ENCODE measurements at regions of chr19 and their contacts with region 1.

Region 1: DNA sequence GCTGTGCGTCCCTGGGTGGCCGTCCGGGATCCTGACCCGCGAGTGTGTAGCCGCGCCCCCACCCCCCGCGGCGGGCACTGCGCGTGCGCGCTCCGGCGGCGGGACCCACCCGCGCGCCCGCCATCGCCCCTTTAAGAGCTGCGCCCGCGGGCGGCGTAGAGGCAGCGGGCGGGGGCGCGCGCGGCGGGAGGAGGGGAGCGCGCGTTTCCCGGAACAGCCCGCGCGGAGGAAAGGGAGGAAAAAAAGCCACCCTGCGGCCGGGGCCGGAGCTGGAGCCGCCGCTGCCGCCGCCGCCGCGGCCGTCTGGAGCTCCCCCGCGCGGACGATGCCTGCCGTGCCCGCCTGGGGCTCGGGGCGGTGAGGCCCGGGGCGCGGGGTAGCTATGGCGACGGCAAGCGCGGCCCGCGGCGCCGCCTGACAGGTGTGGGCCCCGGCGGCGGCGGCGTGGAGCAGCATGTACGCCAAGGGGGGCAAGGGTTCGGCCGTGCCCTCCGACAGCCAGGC is at the start of gene SSBP4:
- DNase-seq: peak; percentile 48 to 80
- H3K4me3 ChIP-seq: peak within 1 kb of the TSS; percentile 68
- H3K27ac ChIP-seq: no peak within 1 kb of the TSS
- H3K4me1 ChIP-seq: peaks cover 52% of the 10 kb centered on the region
- H3K27me3 ChIP-seq: no peaks in the 10 kb centered on the region
- CTCF ChIP-seq: no peak; the same call in 1 of the 2 replicates
- total RNA-seq, gene SSBP4: 56.6 and 65.2 TPM in 2 replicates

Region 2: GRCh38 chr19:18112989-18113478 is 306.2 kb before region 1 on chr19:
- CTCF ChIA-PET with region 1: no interaction called
- POLR2A ChIA-PET with region 1: no interaction called
- intact Hi-C with region 1: loop called (anchors 5 kb)
- DNase-seq: peak; percentile 63 to 82
- H3K4me3 ChIP-seq: no peak overlapping the region
- H3K27ac ChIP-seq: no peak overlapping the region
- H3K4me1 ChIP-seq: peaks cover 17% of the 10 kb centered on the region
- H3K27me3 ChIP-seq: no peaks in the 10 kb centered on the region
- CTCF ChIP-seq: peak; percentile 89

Region 3: DNA sequence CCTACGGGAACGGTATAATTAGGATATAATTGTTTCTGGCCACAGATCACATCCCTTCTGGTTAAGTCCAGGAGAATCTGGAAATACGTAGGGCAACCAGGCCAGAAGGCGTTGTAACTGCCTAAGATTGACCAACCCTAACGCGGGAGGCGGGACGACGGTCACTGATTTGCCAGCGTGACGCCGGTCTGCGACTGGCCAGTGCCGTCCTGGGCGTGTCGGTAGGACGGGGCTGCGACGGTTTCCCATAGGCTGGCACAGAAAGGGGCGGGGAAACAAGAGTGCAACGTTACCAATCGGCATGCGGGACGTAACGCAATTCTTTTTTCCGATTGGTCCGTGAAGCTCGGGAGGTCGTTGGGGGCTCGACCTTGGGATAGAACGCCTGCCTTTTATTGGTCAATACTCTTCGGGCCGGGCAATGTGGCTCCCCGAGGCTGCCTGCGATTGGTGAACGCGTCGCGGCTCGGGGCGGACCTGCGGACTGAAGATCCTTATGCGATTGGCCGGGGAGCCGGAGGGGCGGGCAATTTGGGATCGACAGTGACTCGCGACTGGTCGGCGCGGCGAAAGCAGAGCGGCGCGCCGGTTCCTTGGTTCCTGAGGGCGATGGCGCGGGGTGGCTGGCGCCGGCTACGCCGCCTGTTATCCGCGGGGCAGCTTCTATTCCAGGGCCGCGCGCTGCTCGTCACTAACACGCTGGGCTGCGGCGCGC is 226.4 kb before region 1 on chr19 and contains the start of gene MPV17L2:
- CTCF ChIA-PET with region 1: no interaction called
- POLR2A ChIA-PET with region 1: interaction called, 3 read pairs
- intact Hi-C with region 1: loop called (anchors 5 kb)
- DNase-seq: peak; percentile 99 to 100
- H3K4me3 ChIP-seq: peak within 1 kb of the TSS; percentile 90
- H3K27ac ChIP-seq: peak within 1 kb of the TSS; percentile 73
- H3K4me1 ChIP-seq: peaks cover 16% of the 10 kb centered on the region
- H3K27me3 ChIP-seq: no peaks in the 10 kb centered on the region
- CTCF ChIP-seq: no peak
- total RNA-seq, gene MPV17L2: 11.2 and 12.1 TPM in 2 replicates

Region 4: GRCh38 chr19:18281082-18282020 is 137.9 kb before region 1 on chr19 and contains the start of gene JUND:
- CTCF ChIA-PET with region 1: no interaction called
- POLR2A ChIA-PET with region 1: interaction called, 3 read pairs
- intact Hi-C with region 1: loop called (anchors 5 kb)
- DNase-seq: peak; percentile 91 to 99
- H3K4me3 ChIP-seq: peak within 1 kb of the TSS; percentile 93
- H3K27ac ChIP-seq: peak within 1 kb of the TSS; percentile 97
- H3K4me1 ChIP-seq: peaks cover 21% of the 10 kb centered on the region
- H3K27me3 ChIP-seq: no peaks in the 10 kb centered on the region
- CTCF ChIP-seq: no peak
- total RNA-seq, gene JUND: 115 and 150 TPM in 2 replicates

Region 5: GRCh38 chr19:18349524-18350128 is 69.6 kb before region 1 on chr19:
- CTCF ChIA-PET with region 1: interaction called, 3 read pairs
- POLR2A ChIA-PET with region 1: interaction called, 10 read pairs
- intact Hi-C with region 1: no loop called
- DNase-seq: peak; percentile 63
- H3K4me3 ChIP-seq: no peak overlapping the region
- H3K27ac ChIP-seq: no peak overlapping the region
- H3K4me1 ChIP-seq: peaks cover 10% of the 10 kb centered on the region; the same call in 1 of the 2 replicates
- H3K27me3 ChIP-seq: no peaks in the 10 kb centered on the region
- CTCF ChIP-seq: peak; percentile 93